Astrocyte of the cerebellum (primary cell): ENCODE measurements at regions of chr2 and their contacts with region 1.

Region 1: GRCh38 chr2:176638167-176639015 is 369.1 kb downstream of the MTX2 start:
- DNase-seq: no peak
- H3K4me3 ChIP-seq: peak overlapping the region; percentile 51
- CTCF ChIP-seq: peak; percentile 53

Region 2: DNA sequence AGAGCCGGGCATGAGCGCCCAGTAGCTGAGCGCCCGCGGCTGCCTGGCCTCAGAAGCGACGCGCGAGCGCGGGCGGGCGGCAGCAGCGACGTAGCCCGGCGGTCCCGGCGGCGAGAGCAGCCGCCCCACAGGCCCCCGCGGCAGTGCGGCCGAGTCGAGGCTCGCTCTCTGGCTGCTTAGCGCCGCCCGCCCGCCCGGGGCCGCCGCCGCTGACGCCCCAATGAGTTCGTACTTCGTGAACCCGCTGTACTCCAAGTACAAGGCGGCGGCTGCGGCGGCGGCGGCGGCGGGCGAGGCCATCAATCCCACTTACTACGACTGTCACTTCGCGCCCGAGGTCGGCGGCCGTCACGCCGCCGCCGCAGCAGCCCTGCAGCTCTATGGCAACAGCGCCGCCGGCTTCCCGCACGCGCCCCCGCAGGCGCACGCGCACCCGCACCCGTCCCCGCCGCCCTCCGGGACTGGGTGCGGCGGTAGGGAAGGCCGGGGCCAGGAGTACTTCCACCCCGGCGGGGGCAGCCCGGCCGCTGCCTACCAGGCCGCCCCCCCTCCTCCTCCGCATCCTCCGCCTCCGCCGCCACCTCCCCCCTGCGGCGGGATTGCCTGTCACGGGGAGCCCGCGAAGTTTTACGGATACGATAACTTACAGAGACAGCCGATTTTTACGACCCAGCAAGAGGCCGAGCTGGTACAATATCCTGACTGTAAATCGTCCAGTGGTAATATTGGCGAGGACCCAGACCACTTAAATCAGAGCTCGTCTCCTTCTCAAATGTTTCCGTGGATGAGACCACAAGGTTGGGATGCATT is 508.0 kb before region 1 on chr2:
- in situ Hi-C with region 1: loop called (anchors 10 kb)
- DNase-seq: no peak
- H3K4me3 ChIP-seq: no peak overlapping the region
- CTCF ChIP-seq: no peak

Region 3: DNA sequence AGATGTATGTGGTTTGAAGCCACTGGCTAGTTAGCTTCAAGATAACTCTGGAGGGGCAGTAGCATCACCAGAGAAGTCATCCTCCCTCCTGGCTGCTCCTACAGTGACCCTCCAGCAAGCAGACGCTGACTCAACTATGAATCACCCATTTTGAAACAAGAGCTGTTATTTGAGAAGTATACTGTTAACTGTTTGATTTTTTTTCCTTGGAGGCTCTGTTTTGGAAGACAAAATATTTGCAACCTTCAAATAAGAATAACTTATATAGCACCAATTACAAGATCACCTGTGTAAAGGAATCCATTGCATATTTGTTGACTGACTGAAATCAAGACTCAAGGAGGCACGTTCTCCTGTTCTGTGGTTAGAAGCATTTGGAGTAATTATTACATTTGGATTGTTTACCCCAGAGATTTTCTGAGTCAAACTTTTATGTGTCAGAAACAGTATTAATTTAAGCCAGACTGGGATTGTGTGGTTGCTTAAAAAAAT is 55.4 kb before region 1 on chr2:
- in situ Hi-C with region 1: no loop called
- DNase-seq: peak; percentile 82
- H3K4me3 ChIP-seq: no peak overlapping the region
- CTCF ChIP-seq: no peak